OCI-LY7 (cell line): ENCODE measurements at regions of chr6 and their contacts with region 1.

Region 1: DNA sequence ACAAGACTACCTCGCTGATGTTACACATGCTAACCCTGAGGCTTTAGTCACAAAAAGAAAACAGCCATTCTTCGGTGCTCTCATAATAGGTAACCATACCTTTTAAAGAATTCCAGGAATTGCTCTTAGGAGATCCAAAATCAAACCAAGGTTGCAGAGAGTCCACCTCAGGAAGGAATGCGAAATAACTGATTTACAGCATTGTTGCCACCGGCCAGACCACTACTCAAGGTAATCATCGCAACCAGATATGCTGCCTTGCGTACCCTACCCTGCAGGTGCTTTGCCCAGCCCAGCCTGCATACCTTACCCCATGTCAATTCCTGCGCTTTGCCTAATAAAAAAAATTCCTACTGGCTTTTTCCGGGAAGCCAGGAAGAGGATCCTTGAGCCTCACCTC is 27.0 kb downstream of the NUP153 start:
- DNase-seq: no peak
- H3K4me3 ChIP-seq: no peak overlapping the region
- H3K27ac ChIP-seq: no peak overlapping the region
- H3K4me1 ChIP-seq: no peaks in the 10 kb centered on the region
- CTCF ChIP-seq: no peak

Region 2: DNA sequence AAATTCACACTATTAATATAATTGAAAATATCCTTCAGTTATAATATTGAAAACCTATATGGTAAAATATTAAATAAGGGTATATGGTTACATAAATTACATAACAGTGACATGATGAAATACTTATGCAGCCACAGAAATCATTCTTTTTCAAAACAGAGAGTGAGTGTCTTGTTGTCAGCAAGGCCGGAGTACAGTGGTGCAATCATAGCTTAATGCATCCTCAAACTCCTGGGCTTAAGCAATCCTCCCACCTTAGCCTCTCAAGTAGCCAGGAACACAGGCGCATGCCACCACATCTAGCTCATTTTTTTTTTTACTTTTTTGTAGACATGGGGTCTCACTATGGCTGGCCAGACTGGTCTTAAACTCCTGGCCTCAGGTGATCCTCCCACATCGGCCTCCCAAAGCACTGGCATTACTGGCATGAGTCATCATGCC is 39.2 kb before region 1 on chr6:
- CTCF ChIA-PET with region 1: no interaction called
- POLR2A ChIA-PET with region 1: no interaction called
- intact Hi-C with region 1: loop called (anchors 5 kb)
- DNase-seq: no peak
- H3K4me3 ChIP-seq: no peak overlapping the region
- H3K27ac ChIP-seq: no peak overlapping the region
- H3K4me1 ChIP-seq: no peaks in the 10 kb centered on the region
- CTCF ChIP-seq: no peak

Region 3: GRCh38 chr6:17700421-17701416 is 21.0 kb after region 1 on chr6:
- CTCF ChIA-PET with region 1: no interaction called
- POLR2A ChIA-PET with region 1: interaction called, 11 read pairs
- intact Hi-C with region 1: no loop called
- DNase-seq: no peak
- H3K4me3 ChIP-seq: no peak overlapping the region
- H3K27ac ChIP-seq: peak overlapping the region; percentile 28
- H3K4me1 ChIP-seq: peaks cover 39% of the 10 kb centered on the region
- CTCF ChIP-seq: no peak

Region 4: GRCh38 chr6:17714879-17715851 is 35.4 kb after region 1 on chr6:
- CTCF ChIA-PET with region 1: no interaction called
- POLR2A ChIA-PET with region 1: no interaction called
- intact Hi-C with region 1: no loop called
- DNase-seq: no peak
- H3K4me3 ChIP-seq: no peak overlapping the region
- H3K27ac ChIP-seq: no peak overlapping the region
- H3K4me1 ChIP-seq: no peaks in the 10 kb centered on the region
- CTCF ChIP-seq: no peak